Dendritic cell treated with granulocyte-macrophage colony-stimulating factor and Interleukin-4, amounts not matched to agents 40 ng/mL and 50 ng/mL, for 4 days (primary cell): ENCODE measurements at regions of chr9 and their contacts with region 1.

Region 1: GRCh38 chr9:93095205-93096130 is 549 bp upstream of the CARD19 start:
- H3K4me3 Mint-ChIP-seq: peak overlapping the region; percentile 85
- H3K27ac Mint-ChIP-seq: peak overlapping the region; percentile 91
- H3K4me1 Mint-ChIP-seq: peaks cover 74% of the 10 kb centered on the region
- H3K27me3 Mint-ChIP-seq: no peaks in the 10 kb centered on the region

Region 2: DNA sequence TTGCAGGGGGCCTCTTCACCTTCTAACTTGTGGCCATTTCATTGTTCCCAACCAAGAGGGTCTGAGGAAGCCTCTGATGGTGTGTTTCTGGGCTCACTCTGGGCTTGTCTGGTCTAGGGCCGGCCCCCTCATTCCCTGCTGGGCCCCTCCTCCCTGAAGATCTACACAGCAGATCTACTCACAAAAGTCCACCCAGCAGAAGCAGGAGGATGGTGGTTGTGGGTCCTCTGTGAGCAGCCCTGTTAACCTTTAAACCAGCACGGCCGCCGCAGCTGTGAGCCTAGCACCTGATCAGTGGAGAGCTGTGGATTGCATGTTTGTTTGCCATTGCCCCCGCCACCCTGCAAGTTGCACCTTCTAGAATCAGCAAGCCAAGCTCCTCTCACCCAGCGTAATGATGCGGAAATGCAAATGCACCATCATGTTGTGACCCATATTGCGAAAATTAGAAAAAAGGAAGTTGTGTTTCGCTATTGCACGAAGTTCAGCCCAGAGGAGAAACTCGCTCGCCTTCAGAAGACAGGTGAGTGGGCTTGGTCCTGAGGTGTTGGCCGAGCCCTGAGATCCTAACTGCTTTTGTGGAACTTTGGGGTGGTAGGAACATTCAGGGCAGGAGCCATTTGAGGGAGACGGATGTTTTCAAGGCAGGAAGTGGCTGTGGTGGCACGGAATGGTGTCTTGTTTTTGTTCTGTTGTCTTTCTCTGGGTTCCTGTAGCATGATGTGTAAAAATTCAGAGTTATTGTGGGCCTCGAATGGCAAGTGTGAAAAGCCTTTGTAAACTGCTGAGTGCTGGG is 131.4 kb before region 1 on chr9:
- intact Hi-C with region 1: loop called (anchors 5 kb)
- H3K4me3 Mint-ChIP-seq: peak overlapping the region; percentile 96
- H3K27ac Mint-ChIP-seq: peak overlapping the region; percentile 95
- H3K4me1 Mint-ChIP-seq: peaks cover 55% of the 10 kb centered on the region
- H3K27me3 Mint-ChIP-seq: no peaks in the 10 kb centered on the region

Region 3: GRCh38 chr9:93037476-93037971 is 57.9 kb before region 1 on chr9:
- intact Hi-C with region 1: loop called (anchors 10 kb)
- H3K4me3 Mint-ChIP-seq: peak overlapping the region; percentile 30
- H3K27ac Mint-ChIP-seq: peak overlapping the region; percentile 83
- H3K4me1 Mint-ChIP-seq: peaks cover 86% of the 10 kb centered on the region
- H3K27me3 Mint-ChIP-seq: peaks cover 3% of the 10 kb centered on the region

Region 4: GRCh38 chr9:93058355-93059096 is 36.9 kb before region 1 on chr9 and contains the start of gene SUSD3:
- intact Hi-C with region 1: loop called (anchors 5 kb)
- H3K4me3 Mint-ChIP-seq: peak within 1 kb of the TSS; percentile 66
- H3K27ac Mint-ChIP-seq: peak within 1 kb of the TSS; percentile 65
- H3K4me1 Mint-ChIP-seq: peaks cover 62% of the 10 kb centered on the region
- H3K27me3 Mint-ChIP-seq: peaks cover 20% of the 10 kb centered on the region

Region 5: DNA sequence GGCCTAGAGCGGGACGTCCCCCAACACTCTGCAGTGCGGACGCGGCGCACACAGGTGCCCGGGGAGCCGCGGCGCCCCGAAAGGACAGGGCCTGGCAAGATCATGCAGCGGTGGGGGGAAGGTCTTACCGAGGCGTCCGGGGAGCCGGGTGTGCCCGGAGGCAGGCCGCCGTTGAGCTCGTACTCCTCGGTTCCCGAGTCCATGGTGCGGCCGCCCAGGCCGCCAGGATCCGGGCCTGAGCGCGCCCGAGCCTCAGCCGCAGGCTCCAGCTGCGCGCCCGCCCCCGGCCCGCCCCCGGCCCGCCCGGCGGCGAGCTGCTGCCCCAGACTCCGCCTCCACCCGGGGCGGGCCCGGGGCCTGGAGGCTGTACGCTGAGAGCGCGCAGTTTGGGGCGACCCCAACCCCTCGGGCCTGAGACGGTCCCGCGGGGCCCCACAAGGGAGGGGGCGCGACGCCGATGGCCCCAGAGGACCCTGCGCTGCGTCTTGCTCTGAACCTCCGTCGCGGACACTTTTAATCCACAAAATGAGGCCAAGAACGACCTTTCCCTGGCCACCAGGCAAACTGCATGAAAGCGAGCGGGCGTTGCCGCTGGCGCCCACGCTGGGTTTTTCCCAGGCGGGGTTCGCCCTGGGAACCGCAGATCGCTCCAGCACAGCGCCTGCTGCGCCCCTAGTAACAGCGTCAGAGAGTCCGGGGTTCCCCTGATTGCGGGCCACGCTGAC is 38.7 kb after region 1 on chr9 and contains the start of gene NINJ1:
- intact Hi-C with region 1: loop called (anchors 5 kb)
- H3K4me3 Mint-ChIP-seq: peak within 1 kb of the TSS; percentile 95
- H3K27ac Mint-ChIP-seq: peak within 1 kb of the TSS; percentile 96
- H3K4me1 Mint-ChIP-seq: peaks cover 90% of the 10 kb centered on the region
- H3K27me3 Mint-ChIP-seq: peaks cover 12% of the 10 kb centered on the region

Region 6: DNA sequence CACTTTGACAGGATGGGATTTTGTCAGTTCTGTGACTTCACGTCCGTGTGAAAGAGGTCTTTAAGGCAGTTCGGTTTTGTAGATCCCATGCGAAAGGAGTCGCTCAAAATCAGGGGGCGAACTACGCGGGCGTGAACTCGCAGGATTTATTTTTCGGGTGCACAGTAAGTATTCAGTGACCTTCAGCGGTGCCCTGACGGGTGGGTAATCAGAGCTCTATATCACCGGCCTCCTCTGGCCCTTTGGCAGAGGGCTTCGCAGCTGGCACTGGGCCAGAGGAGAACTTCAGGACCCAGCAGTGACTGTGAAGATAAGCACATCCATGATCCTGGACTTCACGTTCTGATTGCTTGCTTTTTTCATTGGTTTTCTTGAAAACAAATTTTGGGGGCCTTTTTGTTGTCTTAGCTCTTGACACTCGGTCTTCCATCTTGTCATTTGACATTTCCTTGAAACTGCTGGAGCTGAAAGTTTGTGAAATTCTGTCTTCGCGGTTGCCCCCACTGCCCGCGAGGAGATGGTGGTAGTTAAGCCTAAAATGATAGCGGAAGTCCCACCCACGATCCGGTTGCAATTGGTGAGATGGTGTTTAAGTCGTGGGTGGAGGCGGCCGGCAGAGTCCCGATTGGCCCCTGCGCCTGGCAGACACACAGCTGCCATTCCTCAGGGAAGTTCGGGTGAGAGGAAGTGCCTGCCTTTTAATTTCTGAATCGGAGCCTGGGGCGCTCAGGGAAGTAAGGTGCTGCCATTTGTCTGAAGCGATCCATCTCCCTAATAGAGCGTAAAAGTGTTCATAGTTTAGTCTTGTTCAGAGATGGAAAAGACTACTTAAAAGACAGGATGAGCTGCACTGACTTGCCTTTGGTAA is 357.8 kb after region 1 on chr9 and contains the start of gene FAM120AOS:
- intact Hi-C with region 1: loop called (anchors 5 kb)
- H3K4me3 Mint-ChIP-seq: peak within 1 kb of the TSS; percentile 87
- H3K27ac Mint-ChIP-seq: peak within 1 kb of the TSS; percentile 91
- H3K4me1 Mint-ChIP-seq: peaks cover 47% of the 10 kb centered on the region
- H3K27me3 Mint-ChIP-seq: no peaks in the 10 kb centered on the region